ENCODE measurements at regions of chr9 and their contacts with region 1.

Region 1: DNA sequence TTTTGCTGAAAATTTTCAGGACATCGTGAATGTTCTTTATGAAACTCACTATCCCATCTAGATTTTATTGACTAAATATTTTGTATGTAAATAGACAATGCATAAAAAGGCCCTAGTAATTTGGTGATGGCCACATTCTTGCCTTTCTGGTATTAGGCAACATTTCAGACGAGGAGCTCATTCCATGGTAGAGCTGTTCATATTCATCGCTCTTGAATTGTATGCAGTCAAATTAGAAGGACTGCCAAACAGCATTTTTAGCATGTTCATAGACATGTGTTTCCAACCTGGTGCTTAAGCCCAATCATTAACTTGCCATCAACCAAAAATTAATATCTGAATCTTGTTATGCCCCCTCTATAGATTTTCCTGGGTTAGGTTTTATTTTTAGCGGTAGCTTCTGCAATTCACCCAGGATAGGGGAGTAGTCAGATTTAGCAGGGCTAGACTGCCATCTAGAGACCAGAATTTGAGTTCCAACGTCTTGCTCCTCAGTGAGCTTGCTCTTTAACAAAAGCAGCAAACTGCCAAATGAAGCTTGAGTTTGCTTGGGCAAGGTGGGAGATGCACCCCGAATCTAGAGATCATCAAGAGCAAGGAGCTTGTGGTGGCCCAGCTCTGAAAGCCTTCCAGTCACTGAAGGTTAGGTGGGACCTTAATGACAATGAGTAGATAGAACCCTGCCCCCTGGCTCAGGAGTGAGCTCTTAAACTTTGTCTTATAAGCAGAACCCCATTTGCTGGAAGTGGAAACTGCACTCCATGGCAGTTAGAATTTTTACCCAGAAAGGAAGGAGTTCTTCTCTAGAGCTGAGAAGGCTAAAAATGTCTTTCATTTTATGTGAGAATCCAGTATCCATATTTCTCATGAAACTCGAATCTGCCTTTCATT is 456.2 kb downstream of the RASEF start:
- DNase-seq: peak; percentile 69
- ATAC-seq: peak; percentile 91
- H3K4me3 ChIP-seq: no peak overlapping the region; a peak in 1 of 6 replicates
- H3K27ac ChIP-seq: peak overlapping the region; percentile 24
- H3K4me1 ChIP-seq: peaks cover 55% of the 10 kb centered on the region
- H3K27me3 ChIP-seq: no peaks in the 10 kb centered on the region
- CTCF ChIP-seq: peak; percentile 84
- EP300 ChIP-seq: no peak
- POLR2A ChIP-seq: no peak
- RAD21 ChIP-seq: peak; percentile 76

Region 2: GRCh38 chr9:81521892-81522291 is 1084.8 kb before region 1 on chr9:
- CTCF ChIA-PET with region 1: no interaction called
- POLR2A ChIA-PET with region 1: no interaction called
- in situ Hi-C with region 1: no loop called
- intact Hi-C with region 1: loop called (anchors 5 kb)
- DNase-seq: peak; percentile 57
- ATAC-seq: peak; percentile 52
- H3K4me3 ChIP-seq: no peak overlapping the region
- H3K27ac ChIP-seq: no peak overlapping the region
- H3K4me1 ChIP-seq: peaks cover 45% of the 10 kb centered on the region
- H3K27me3 ChIP-seq: no peaks in the 10 kb centered on the region
- CTCF ChIP-seq: no peak
- EP300 ChIP-seq: no peak
- POLR2A ChIP-seq: no peak
- RAD21 ChIP-seq: no peak

Region 3: DNA sequence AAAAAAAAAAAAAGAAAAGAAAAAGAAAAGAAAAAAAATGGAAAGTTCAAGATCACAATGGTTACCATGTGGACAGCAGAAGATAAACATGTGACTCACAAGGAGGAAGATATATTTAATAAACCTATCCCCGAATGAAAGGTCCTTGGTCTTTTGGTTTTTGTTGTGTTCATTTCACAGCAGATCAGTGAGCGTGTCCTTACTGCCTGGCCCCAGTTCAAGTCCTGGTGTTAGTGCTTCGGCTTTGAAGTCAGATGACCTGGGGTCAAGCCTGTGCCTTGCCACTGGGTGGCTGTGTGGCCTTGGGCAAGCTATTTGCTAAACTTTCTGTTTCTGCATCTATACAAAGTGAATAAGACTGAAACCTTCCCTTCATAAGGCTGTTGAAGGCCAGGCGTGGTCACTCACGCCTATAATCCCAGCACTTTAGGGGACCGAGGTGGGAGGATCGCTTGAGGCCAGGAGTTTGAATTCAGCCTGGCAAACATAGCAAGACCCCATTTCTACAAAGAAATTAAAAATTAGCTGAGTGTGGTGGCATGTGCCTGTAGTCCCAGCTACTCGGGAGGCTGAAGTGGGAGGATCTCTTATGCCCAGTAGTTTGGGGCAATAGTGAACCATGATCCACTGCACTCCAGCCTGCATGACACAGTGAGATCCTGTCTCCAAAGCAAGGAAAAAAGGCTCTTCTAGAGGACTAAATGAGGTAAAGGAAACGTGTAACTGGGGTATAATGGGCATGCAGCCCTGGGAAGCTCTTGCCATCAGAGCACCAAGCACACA is 773.0 kb before region 1 on chr9:
- CTCF ChIA-PET with region 1: no interaction called
- POLR2A ChIA-PET with region 1: no interaction called
- in situ Hi-C with region 1: no loop called
- intact Hi-C with region 1: loop called (anchors 10 kb)
- DNase-seq: peak; percentile 72
- ATAC-seq: peak; percentile 97
- H3K4me3 ChIP-seq: no peak overlapping the region
- H3K27ac ChIP-seq: no peak overlapping the region
- H3K4me1 ChIP-seq: peaks cover 23% of the 10 kb centered on the region
- H3K27me3 ChIP-seq: no peaks in the 10 kb centered on the region; a peak in 1 of 5 replicates
- CTCF ChIP-seq: peak; percentile 69
- EP300 ChIP-seq: peak in 1 of 2 experiments; percentile 61; a peak in 2 of 4 replicates
- POLR2A ChIP-seq: no peak
- RAD21 ChIP-seq: no peak

Region 4: GRCh38 chr9:82488313-82489200 is 118.2 kb before region 1 on chr9:
- CTCF ChIA-PET with region 1: no interaction called
- POLR2A ChIA-PET with region 1: no interaction called
- in situ Hi-C with region 1: no loop called
- intact Hi-C with region 1: loop called (anchors 5 kb)
- DNase-seq: peak; percentile 80
- ATAC-seq: peak; percentile 85
- H3K4me3 ChIP-seq: no peak overlapping the region; a peak in 1 of 6 replicates
- H3K27ac ChIP-seq: peak overlapping the region; percentile 58
- H3K4me1 ChIP-seq: peaks cover 43% of the 10 kb centered on the region
- H3K27me3 ChIP-seq: no peaks in the 10 kb centered on the region; a peak in 1 of 5 replicates
- CTCF ChIP-seq: no peak
- EP300 ChIP-seq: peak in 1 of 2 experiments; percentile 47; a peak in 1 of 4 replicates
- POLR2A ChIP-seq: no peak
- RAD21 ChIP-seq: no peak

Region 5: GRCh38 chr9:82553654-82554366 is 52.9 kb before region 1 on chr9:
- CTCF ChIA-PET with region 1: interaction called, 6 read pairs
- POLR2A ChIA-PET with region 1: interaction called, 16 read pairs
- in situ Hi-C with region 1: no loop called
- intact Hi-C with region 1: loop called (anchors 1 kb)
- DNase-seq: no peak
- ATAC-seq: no peak
- H3K4me3 ChIP-seq: no peak overlapping the region
- H3K27ac ChIP-seq: no peak overlapping the region
- H3K4me1 ChIP-seq: peaks cover 43% of the 10 kb centered on the region
- H3K27me3 ChIP-seq: no peaks in the 10 kb centered on the region
- CTCF ChIP-seq: no peak
- EP300 ChIP-seq: no peak
- POLR2A ChIP-seq: no peak
- RAD21 ChIP-seq: no peak